ENCODE measurements at regions of chr12 and their contacts with region 1.

Region 1: DNA sequence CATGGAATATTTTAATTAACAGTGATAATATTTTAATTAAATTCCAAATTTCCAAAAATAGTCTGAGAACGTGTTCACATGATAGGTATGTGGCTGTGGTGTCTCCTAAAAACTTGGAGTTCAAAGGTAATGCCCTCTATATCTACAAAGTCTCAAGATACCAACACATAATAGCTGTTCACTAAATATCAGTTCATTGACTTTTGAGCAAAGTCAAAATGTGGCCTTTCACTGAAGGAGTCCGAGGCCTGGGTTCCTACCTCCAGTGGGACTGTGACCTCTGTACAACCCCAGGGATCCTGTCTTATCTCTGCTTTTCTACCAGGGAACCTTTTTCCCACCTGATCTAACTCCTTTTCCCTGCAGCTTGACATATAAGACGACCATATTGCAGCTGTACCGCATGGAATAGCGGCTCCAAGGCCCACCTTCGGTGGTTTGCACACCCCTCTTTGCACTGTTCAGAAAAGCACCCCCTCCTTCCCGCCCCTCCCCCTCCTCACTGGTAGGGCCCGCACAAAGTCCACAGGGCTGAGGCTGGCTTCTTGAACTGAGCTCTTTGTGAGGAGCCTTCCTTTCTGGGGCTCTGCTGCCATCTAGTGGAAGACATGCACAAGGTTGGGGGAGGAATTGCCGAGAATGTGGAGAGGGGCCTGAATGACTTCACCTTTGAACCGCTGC is 3.1 kb downstream of the CCND2 start:
- DNase-seq: peak; percentile 91
- ATAC-seq: peak; percentile 40
- H3K4me3 ChIP-seq: no peak overlapping the region
- H3K4me3 Mint-ChIP-seq: peak overlapping the region; percentile 99
- H3K27ac ChIP-seq: no peak overlapping the region
- H3K27ac Mint-ChIP-seq: peak overlapping the region; percentile 2
- H3K4me1 ChIP-seq: peaks cover 18 to 37% of the 10 kb centered on the region in 2 donors
- H3K4me1 Mint-ChIP-seq: peaks cover 32% of the 10 kb centered on the region
- H3K27me3 ChIP-seq: no peaks in the 10 kb centered on the region
- H3K27me3 Mint-ChIP-seq: no peaks in the 10 kb centered on the region
- CTCF ChIP-seq: peak; percentile 85

Region 2: DNA sequence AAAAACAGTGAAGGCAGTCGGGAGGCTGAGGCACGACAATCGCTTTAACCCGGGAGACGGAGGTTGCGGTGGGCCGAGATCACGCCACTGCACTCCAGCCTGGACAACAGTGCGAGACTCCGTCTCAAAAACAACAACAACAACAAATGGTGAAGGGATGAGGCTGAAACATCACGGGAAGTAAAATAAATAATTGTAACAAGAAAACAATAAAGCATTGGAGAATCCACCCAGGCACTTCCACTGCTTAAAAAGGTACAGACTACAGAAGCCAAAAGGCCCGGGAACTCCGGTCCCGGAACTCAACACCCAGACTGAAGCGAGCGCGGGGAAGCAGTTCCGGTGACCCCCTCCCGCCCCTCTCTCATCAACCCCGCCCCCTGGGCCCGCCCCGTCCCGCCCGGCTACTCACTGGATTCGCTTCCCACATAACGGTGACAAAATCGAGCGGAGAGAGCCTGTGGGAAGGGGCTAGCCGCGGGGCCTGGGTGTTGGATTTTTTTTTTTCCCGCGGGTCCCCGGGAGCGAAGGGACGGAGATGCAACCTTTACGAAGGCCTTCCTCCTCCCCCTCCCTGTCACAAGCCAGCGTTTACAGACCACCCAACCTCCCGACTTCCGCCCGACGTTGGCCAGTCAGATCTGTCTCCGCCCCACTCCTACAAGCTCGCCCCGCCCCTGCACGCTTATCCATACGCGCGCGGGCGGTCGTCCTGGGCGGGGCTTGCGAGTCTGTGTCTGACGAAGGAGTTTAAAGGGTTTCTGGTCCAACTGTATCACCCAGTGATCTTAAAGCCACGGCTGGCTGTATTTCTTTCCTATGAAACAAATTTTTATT is 403.6 kb before region 1 on chr12 and contains the start of gene PARP11:
- CTCF ChIA-PET with region 1: interaction called, 19 read pairs
- POLR2A ChIA-PET with region 1: interaction called, 6 read pairs
- intact Hi-C with region 1: no loop called
- DNase-seq: peak; percentile 98
- ATAC-seq: peak; percentile 98
- H3K4me3 ChIP-seq: peak within 1 kb of the TSS; percentile 71 to 91 (median 75)
- H3K4me3 Mint-ChIP-seq: peak within 1 kb of the TSS; percentile 94
- H3K27ac ChIP-seq: peak within 1 kb of the TSS; percentile 90 to 93
- H3K27ac Mint-ChIP-seq: peak within 1 kb of the TSS; percentile 94
- H3K4me1 ChIP-seq: peaks cover 33 to 37% of the 10 kb centered on the region in 2 donors
- H3K4me1 Mint-ChIP-seq: peaks cover 46% of the 10 kb centered on the region
- H3K27me3 ChIP-seq: no peaks in the 10 kb centered on the region
- H3K27me3 Mint-ChIP-seq: peaks cover 5% of the 10 kb centered on the region
- CTCF ChIP-seq: no peak
- total RNA-seq, gene PARP11: 24.3 and 26.3 TPM in 2 replicates

Region 3: DNA sequence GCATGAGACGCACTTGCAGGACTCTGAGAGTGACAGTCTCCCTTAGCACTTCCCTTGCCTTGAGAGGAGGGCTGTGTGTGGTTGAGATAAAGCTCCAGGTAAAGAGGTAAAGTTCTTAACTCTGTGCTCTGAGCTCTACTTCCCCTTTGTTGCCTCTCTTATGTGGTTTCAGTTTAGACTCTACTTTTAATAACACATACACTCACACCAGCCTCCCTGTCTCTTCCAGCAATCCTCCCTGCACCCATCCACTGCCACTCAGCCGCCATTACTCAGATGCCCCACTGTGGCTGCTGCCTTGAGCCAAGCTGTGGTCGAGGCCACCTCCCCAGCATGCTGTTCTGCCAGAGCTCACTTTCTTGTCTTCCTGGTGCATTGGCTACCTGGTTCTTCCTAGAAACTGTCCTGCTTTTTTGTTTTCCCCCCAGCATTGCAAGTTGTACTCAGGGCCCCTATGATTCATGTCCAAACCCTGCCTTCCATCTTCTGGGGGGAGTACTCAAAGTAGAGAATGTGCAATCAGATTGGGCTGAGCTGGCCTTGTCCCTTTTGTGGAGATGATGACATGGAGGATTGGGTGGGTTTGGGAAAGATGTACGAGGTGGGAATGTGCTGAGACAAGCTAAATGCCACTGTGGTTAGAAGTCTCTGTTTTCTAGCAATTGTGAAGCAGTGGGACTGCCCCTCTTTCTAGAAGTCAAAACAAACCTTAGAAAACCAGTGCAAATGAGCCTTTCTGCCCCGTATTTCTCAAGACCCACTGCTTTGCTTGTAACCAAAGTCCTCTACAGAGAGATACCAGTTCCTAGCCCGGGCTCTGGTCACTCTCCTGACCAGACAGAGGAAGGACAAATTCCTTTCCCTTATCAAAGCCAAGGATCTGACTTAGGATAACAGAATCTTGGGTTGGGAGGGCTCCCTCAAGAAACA is 287.9 kb before region 1 on chr12:
- CTCF ChIA-PET with region 1: interaction called, 293 read pairs
- POLR2A ChIA-PET with region 1: interaction called, 3 read pairs
- intact Hi-C with region 1: no loop called
- DNase-seq: peak; percentile 57
- ATAC-seq: peak; percentile 76
- H3K4me3 ChIP-seq: peak overlapping the region in 1 of 5 experiments; percentile 6
- H3K4me3 Mint-ChIP-seq: peak overlapping the region; percentile 9
- H3K27ac ChIP-seq: peak overlapping the region in 1 of 2 donors; percentile 16
- H3K27ac Mint-ChIP-seq: peak overlapping the region; percentile 72
- H3K4me1 ChIP-seq: peaks cover 11% of the 10 kb centered on the region in 2 donors
- H3K4me1 Mint-ChIP-seq: peaks cover 16% of the 10 kb centered on the region
- H3K27me3 ChIP-seq: no peaks in the 10 kb centered on the region
- H3K27me3 Mint-ChIP-seq: peaks cover 6% of the 10 kb centered on the region
- CTCF ChIP-seq: no peak

Region 4: GRCh38 chr12:4107436-4107878 is 169.2 kb before region 1 on chr12:
- CTCF ChIA-PET with region 1: interaction called, 136 read pairs
- POLR2A ChIA-PET with region 1: interaction called, 5 read pairs
- intact Hi-C with region 1: loop called (anchors 1 kb)
- DNase-seq: peak; percentile 92
- ATAC-seq: peak; percentile 97
- H3K4me3 ChIP-seq: no peak overlapping the region
- H3K4me3 Mint-ChIP-seq: peak overlapping the region; percentile 9
- H3K27ac ChIP-seq: no peak overlapping the region
- H3K27ac Mint-ChIP-seq: peak overlapping the region; percentile 1
- H3K4me1 ChIP-seq: peaks cover 6 to 8% of the 10 kb centered on the region in 2 donors
- H3K4me1 Mint-ChIP-seq: peaks cover 8% of the 10 kb centered on the region
- H3K27me3 ChIP-seq: peaks cover 0 to 6% (median 0%) of the 10 kb centered on the region in 4 experiments
- H3K27me3 Mint-ChIP-seq: peaks cover 7% of the 10 kb centered on the region
- CTCF ChIP-seq: peak; percentile 81

Region 5: DNA sequence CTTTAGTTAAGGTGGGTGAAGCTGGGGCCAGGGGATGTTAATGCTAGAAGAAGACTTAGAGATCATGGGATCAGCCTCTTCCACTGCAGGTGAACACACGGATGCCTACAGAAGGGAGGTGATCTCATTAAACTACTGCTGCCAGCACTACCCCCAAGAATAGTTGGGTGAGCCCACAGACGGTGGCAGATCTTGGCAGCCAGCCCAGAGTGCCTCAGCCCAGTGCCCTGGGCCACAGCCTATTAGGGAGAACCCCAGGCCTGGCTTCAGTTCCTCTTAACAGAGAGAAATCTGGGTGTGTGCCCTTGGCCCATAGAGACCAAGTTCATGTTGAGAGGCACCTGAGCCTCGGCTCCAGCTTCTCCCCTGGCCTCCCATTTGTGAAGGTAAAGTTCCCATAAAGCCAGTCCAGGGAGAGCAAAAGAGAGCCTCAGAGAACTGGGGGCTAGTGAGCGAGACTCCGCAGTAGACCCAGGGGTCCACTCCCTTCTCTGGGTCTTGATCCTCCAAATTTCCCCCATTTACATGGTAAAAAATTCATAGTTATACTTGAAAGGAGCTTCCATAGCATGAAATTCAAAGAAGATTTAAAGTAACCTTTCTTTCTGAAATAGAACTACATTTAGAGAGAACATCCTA is 128.1 kb before region 1 on chr12:
- CTCF ChIA-PET with region 1: interaction called, 116 read pairs
- POLR2A ChIA-PET with region 1: interaction called, 16 read pairs
- intact Hi-C with region 1: no loop called
- DNase-seq: peak; percentile 96
- ATAC-seq: peak; percentile 89
- H3K4me3 ChIP-seq: peak overlapping the region in 1 of 5 experiments; percentile 6
- H3K4me3 Mint-ChIP-seq: peak overlapping the region; percentile 84
- H3K27ac ChIP-seq: peak overlapping the region; percentile 80 to 90
- H3K27ac Mint-ChIP-seq: peak overlapping the region; percentile 91
- H3K4me1 ChIP-seq: peaks cover 73 to 88% of the 10 kb centered on the region in 2 donors
- H3K4me1 Mint-ChIP-seq: peaks cover 90% of the 10 kb centered on the region
- H3K27me3 ChIP-seq: no peaks in the 10 kb centered on the region
- H3K27me3 Mint-ChIP-seq: no peaks in the 10 kb centered on the region
- CTCF ChIP-seq: no peak

Region 6: DNA sequence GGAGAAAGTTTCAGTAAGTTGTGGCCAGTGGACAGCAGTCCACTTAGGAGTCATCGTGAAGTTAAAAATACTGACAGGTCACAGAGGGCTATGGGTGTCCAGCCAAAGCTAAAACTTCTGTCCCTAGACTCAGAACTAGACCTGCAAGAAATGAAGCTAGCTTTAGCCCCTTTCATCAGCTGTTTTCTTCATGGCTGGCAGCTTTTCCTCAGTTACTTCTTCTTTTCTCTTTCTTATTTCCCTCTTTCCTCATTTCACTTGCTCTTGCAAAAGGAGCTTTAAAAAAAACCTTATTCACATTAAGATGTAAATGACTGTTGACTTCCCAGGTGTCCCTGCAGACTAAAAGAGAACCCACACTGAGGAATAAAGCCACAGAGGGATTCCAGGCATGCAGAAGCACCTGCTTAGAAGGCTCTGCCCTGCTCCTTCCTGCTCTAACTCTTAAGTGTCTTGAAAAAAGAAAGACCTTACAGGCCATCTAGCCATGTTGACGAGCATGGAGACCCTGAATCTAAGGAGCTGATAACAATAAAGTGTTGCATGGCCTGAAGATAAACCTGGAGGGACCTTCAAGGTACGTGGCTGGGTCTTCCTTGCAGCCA is 72.8 kb before region 1 on chr12:
- CTCF ChIA-PET with region 1: interaction called, 32 read pairs
- POLR2A ChIA-PET with region 1: interaction called, 8 read pairs
- intact Hi-C with region 1: no loop called
- DNase-seq: peak; percentile 50
- ATAC-seq: no peak
- H3K4me3 ChIP-seq: no peak overlapping the region
- H3K4me3 Mint-ChIP-seq: peak overlapping the region; percentile 50
- H3K27ac ChIP-seq: no peak overlapping the region
- H3K27ac Mint-ChIP-seq: peak overlapping the region; percentile 53
- H3K4me1 ChIP-seq: peaks cover 52 to 54% of the 10 kb centered on the region in 2 donors
- H3K4me1 Mint-ChIP-seq: peaks cover 58% of the 10 kb centered on the region
- H3K27me3 ChIP-seq: no peaks in the 10 kb centered on the region
- H3K27me3 Mint-ChIP-seq: no peaks in the 10 kb centered on the region
- CTCF ChIP-seq: no peak

Region 7: DNA sequence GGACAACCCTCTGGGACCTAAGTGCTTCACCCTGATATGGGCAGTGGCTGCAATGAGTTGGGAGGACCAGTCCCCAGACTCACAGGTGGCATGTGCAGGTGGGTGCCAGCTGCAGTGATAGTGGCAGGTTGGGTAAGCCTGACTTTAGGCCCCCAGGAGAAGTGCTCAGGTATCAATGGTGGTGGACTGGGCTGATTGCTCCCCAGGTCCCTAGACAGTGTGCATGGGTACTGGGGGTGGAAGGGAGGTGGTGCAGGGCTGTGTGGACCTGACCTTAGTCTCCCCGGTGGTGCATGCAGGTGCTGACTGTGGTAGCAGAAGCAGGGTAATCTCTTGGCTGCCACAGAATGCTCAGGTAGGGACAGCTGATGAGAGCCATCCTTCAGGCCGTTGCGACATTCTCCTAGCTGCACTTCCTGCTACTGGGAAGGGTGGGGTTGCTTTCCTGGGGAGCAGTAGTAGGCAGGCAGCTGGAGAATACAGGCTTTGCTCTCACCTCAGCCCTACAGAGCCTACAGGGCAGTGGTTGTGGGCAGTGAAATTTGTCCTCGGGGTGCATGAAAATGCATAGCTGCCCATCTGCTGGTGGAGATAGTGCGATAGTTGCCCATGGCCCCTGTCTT is 36.4 kb before region 1 on chr12:
- CTCF ChIA-PET with region 1: no interaction called
- POLR2A ChIA-PET with region 1: no interaction called
- intact Hi-C with region 1: no loop called
- DNase-seq: no peak
- ATAC-seq: no peak
- H3K4me3 ChIP-seq: no peak overlapping the region
- H3K4me3 Mint-ChIP-seq: no peak overlapping the region
- H3K27ac ChIP-seq: no peak overlapping the region
- H3K27ac Mint-ChIP-seq: no peak overlapping the region
- H3K4me1 ChIP-seq: no peaks in the 10 kb centered on the region
- H3K4me1 Mint-ChIP-seq: no peaks in the 10 kb centered on the region
- H3K27me3 ChIP-seq: peaks cover 0 to 7% (median 0%) of the 10 kb centered on the region in 4 experiments
- H3K27me3 Mint-ChIP-seq: peaks cover 27% of the 10 kb centered on the region
- CTCF ChIP-seq: no peak

Region 8: GRCh38 chr12:4293299-4293965 is 16.8 kb after region 1 on chr12:
- CTCF ChIA-PET with region 1: interaction called, 32 read pairs
- POLR2A ChIA-PET with region 1: interaction called, 8 read pairs
- intact Hi-C with region 1: no loop called
- DNase-seq: no peak
- ATAC-seq: no peak
- H3K4me3 ChIP-seq: no peak overlapping the region
- H3K4me3 Mint-ChIP-seq: no peak overlapping the region
- H3K27ac ChIP-seq: no peak overlapping the region
- H3K27ac Mint-ChIP-seq: no peak overlapping the region
- H3K4me1 ChIP-seq: peaks cover 12 to 16% of the 10 kb centered on the region in 2 donors
- H3K4me1 Mint-ChIP-seq: peaks cover 13% of the 10 kb centered on the region
- H3K27me3 ChIP-seq: no peaks in the 10 kb centered on the region
- H3K27me3 Mint-ChIP-seq: no peaks in the 10 kb centered on the region
- CTCF ChIP-seq: no peak

Region 9: GRCh38 chr12:4346931-4347330 is 70.3 kb after region 1 on chr12:
- CTCF ChIA-PET with region 1: no interaction called
- POLR2A ChIA-PET with region 1: no interaction called
- intact Hi-C with region 1: no loop called
- DNase-seq: no peak
- ATAC-seq: no peak
- H3K4me3 ChIP-seq: no peak overlapping the region
- H3K4me3 Mint-ChIP-seq: no peak overlapping the region
- H3K27ac ChIP-seq: no peak overlapping the region
- H3K27ac Mint-ChIP-seq: no peak overlapping the region
- H3K4me1 ChIP-seq: no peaks in the 10 kb centered on the region
- H3K4me1 Mint-ChIP-seq: no peaks in the 10 kb centered on the region
- H3K27me3 ChIP-seq: no peaks in the 10 kb centered on the region
- H3K27me3 Mint-ChIP-seq: no peaks in the 10 kb centered on the region
- CTCF ChIP-seq: no peak

Measured in B cell (primary cell).